Sciatic nerve (tissue), 2 donors: ENCODE measurements at regions of chr4 and their contacts with region 1.

Region 1: GRCh38 chr4:87375719-87376291 is 15.2 kb downstream of the HSD17B11 start:
- DNase-seq: no peak
- ATAC-seq: peak; percentile 86

Region 2: DNA sequence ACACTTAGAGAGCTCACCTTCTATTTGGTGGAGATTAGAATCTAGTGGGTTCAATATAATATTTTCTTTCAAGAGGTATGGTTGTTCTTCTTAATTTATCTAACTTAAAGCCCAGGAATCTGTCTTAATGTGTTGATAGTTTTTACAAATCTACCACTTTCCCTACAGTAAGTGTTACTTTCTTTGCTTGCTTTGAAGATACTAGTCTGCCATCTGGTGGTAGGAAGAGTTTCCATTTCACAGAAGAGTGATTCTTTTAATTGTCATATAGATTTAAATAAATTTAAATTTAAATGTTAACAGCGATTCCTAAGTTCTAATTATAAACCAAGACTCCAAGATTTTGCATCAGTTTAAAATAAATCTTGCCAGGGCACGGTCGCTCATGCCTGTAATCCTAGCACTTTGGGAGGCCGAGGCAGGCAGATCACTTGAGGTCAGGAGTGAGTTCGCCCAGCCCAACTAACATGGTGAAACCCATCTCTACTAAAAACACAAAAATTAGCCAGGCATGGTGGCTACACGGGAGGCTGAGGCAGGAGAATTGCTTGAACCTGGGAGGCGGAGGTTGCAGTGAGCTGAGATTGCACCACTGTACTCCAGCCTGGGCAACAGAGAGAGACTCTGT is 90.0 kb after region 1 on chr4:
- intact Hi-C with region 1: loop called (anchors 2 kb)
- DNase-seq: no peak
- ATAC-seq: peak; percentile 62